AG04449 (cell line): ENCODE measurements at regions of chr16 and their contacts with region 1.

Region 1: GRCh38 chr16:67104061-67104460 is 5.7 kb upstream of the PHAF1 start:
- DNase-seq: no peak
- H3K4me3 ChIP-seq: no peak overlapping the region
- CTCF ChIP-seq: peak; percentile 38

Region 2: GRCh38 chr16:66954097-66954659 is 149.9 kb before region 1 on chr16:
- CTCF ChIA-PET with region 1: interaction called, 20 read pairs
- POLR2A ChIA-PET with region 1: no interaction called
- DNase-seq: no peak
- H3K4me3 ChIP-seq: no peak overlapping the region
- CTCF ChIP-seq: peak; percentile 78

Region 3: DNA sequence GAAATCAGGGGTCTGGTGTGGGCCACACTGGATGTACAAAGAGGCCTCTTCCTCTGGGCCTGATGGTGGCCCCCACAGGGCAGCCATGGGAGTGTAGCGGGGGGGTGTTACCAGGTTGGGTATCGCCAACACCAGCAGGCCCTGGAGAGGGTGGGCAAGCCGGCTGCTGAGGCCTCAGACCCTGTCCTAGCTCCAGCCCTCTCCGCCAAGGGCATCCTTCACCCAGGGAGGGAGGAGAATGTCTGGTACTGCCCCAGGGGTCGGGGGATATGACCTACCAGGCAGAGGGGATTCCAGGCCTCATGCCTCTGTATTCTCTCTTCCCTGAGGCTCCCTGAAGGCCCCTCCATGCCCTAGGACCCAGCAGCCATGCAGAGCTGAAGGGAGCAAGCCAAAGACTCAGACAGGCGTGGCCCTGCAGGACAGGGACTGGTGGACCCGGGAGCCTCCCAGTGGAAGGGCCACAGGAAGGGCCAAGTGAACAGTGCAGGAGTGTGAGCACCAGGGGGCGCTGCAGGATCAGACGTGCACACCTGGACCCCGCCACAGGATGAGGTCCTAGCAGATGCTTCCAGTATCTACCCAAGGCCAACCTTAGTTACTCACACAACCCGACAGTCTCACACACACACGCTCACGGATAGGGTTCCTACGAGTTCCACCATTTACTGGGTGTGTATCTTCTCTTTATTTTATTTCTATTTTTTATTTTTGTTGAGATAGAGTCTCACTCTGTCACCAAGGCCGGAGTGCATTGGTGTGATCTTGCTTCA is 126.5 kb before region 1 on chr16:
- CTCF ChIA-PET with region 1: interaction called, 55 read pairs
- POLR2A ChIA-PET with region 1: no interaction called
- DNase-seq: no peak
- H3K4me3 ChIP-seq: no peak overlapping the region
- CTCF ChIP-seq: peak; percentile 98

Region 4: DNA sequence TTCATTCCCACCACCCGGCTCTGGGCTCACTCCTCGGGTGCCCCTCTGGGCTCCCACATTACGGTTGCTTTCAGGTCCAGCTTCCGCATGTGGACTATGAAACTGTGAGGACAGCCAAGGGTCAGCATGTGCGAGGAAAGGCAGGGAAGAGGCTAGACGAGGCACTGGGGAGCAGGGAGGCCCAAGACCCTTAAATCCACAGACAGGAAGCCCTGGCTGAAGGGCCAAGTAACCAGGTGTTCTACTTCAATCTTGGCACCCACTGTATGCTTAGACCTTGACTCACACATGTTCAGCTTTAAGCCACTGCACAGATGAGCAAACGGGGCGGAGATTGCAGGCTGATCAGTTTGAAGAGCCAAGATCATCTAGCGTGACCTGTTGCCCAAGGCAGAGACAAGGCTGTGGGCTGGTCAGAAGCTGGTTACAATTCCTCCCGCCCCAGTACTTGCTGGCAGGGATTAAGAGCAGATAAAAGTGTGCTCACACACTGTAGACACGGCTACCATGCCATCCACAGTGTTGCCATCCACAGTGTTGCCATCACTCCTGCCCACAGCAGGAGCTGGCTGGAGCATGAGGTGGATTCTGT is 115.8 kb before region 1 on chr16 and contains the start of gene CES4A:
- CTCF ChIA-PET with region 1: interaction called, 15 read pairs
- POLR2A ChIA-PET with region 1: no interaction called
- DNase-seq: no peak
- H3K4me3 ChIP-seq: no peak within 1 kb of the TSS
- CTCF ChIP-seq: no peak

Region 5: DNA sequence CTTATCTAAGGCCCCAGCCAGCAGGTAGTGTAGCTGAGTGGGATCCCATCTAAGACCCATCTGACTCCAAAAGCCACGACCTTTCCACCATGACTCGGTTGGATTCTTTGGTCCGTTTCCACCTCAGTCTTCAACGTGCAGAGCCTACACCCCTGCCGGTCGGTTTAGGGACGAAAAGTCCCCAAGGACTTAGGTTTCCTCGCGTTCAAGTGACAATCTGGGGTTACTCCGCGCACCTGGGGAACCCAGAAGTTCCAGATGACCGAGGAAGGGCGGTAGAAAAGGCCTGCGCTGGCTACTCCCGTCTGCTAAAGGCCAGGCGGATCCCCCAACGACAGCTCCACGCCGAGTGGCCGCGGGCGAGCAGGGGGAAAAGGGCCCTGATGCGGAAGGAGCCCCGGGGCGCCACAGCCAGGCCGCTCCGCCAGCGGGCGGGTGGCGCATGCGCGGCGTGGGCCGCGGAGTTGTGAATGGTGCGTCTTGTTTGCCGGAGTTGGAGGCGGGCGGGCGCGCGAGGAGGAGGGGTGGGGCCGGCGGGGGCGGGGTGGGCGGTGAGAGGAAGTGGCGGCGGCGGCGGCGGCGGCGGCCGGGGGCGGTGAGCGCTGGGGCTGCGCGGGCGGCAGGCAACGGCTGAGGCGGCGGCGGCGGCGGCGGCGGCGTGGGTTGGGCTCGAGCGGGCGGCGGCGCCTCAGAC is 75.4 kb before region 1 on chr16 and contains the start of gene CBFB:
- CTCF ChIA-PET with region 1: interaction called, 15 read pairs
- POLR2A ChIA-PET with region 1: no interaction called
- DNase-seq: peak; percentile 19
- H3K4me3 ChIP-seq: peak within 1 kb of the TSS; percentile 78
- CTCF ChIP-seq: no peak

Region 6: DNA sequence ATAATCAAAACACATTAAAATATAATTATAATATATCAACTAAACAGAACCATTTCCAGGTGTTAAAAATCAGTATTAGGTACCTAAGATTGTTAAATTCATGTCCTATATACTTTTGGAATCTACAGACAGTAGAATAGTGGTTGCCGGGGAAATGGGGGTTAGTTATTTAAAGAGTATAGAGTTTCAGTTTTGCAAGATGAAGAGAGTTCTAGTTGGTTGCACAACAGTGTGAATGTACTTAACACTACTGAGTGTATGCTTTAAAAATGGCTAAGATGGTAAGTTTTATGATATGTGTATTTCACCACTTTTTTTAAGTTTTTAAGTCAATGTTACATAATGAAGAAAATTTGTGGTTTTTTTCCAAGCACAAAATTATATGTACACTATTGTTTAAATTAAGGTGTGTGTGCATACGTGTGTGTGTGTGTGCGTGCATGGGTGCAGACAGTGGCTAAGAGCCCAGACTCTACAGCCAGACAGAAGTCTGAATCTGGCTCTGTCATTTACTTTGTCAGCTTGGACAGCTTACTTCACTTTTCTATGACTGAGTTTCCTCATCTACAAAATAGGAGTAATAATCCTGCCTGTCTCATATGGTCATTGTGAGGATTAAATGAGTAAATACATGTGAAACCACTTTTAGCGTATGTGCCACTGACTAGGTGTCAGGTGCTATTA is 19.6 kb before region 1 on chr16:
- CTCF ChIA-PET with region 1: interaction called, 15 read pairs
- POLR2A ChIA-PET with region 1: no interaction called
- DNase-seq: no peak
- H3K4me3 ChIP-seq: no peak overlapping the region
- CTCF ChIP-seq: no peak

Region 7: GRCh38 chr16:67356396-67356795 is 252.3 kb after region 1 on chr16:
- CTCF ChIA-PET with region 1: no interaction called
- POLR2A ChIA-PET with region 1: no interaction called
- DNase-seq: no peak
- H3K4me3 ChIP-seq: no peak overlapping the region
- CTCF ChIP-seq: no peak